ENCODE measurements at regions of chr18 and their contacts with region 1.

Region 1: DNA sequence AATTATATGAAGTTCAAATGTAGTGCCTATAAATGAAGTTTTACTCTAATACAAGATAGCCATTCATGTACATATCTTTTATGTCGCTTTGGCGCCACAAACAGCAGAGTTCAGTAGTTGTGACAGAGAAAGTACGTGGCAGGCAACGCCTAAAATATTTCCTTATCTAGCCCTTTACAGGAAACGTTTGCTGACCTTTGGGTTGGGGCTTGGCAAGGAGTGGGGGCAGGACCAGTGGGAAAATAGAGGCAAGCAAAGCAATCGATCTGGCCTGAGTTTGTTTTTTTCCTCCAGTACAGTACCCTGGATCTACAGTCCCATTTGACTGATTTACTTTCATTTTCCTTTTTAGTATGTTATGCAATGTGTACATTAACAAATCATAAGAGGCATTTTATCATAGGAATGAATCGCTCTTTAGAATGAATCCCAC is 13.1 kb downstream of the CCDC68 start:
- DNase-seq: peak in 6 of 14 experiments; percentile 8 to 52 (median 31)
- ATAC-seq: peak; percentile 51
- H3K4me3 ChIP-seq: peak overlapping the region; percentile 62
- H3K4me3 Mint-ChIP-seq: peak overlapping the region; percentile 86
- H3K27ac ChIP-seq: peak overlapping the region in 1 of 2 donors; percentile 44
- H3K27ac Mint-ChIP-seq: peak overlapping the region; percentile 81
- H3K4me1 ChIP-seq: peaks cover 9% of the 10 kb centered on the region
- H3K4me1 Mint-ChIP-seq: peaks cover 18% of the 10 kb centered on the region
- H3K27me3 ChIP-seq: no peaks in the 10 kb centered on the region
- H3K27me3 Mint-ChIP-seq: no peaks in the 10 kb centered on the region
- CTCF ChIP-seq: no peak

Region 2: DNA sequence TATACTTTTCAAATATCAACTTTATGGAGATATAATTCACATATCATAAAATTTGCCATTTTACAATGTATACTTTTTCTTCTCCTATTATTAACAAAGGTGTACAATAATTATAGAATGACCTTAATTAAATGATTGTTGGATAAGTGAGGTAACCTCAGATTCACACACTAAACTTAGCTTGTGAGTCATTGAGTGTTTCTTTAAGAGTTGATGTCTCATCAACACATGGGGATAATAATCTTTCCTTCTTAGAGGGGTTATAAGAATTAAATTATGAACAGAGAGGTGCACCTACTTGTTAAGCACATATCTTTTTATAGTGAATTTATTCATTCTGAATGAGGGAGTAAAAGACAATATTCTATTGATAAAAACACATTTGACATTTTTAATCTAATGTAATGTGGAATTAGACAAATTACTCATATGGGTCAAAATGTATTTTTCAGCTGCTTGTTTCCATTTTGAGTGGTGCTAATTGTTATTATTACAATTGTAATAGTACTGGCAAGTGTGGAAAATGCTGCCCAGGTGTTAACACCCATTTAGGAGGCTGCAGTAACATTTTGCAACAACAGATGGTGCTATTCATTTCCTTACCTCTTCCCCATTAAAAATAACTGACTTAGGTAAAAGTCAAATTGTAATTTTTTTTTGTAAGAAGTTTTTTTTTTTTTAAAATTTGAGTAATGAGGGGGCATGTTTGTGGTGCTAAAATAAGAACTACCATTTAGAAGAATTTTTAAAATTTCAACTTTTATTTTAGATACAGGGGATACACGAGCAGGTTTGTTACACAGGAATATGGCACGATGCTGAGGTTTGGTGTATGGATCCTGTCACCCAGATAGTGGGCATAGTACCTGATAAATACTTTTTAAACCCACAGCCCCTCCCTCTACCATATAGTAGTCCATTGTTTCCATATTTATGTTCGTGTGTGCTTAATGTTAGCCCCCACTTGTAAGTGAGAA is 387.3 kb before region 1 on chr18:
- CTCF ChIA-PET with region 1: no interaction called
- POLR2A ChIA-PET with region 1: no interaction called
- intact Hi-C with region 1: loop called (anchors 1 to 5 kb)
- DNase-seq: peak in 3 of 14 experiments; percentile 14 to 34 (median 23)
- ATAC-seq: no peak
- H3K4me3 ChIP-seq: no peak overlapping the region
- H3K4me3 Mint-ChIP-seq: no peak overlapping the region
- H3K27ac ChIP-seq: no peak overlapping the region
- H3K27ac Mint-ChIP-seq: no peak overlapping the region
- H3K4me1 ChIP-seq: no peaks in the 10 kb centered on the region
- H3K4me1 Mint-ChIP-seq: no peaks in the 10 kb centered on the region
- H3K27me3 ChIP-seq: no peaks in the 10 kb centered on the region
- H3K27me3 Mint-ChIP-seq: no peaks in the 10 kb centered on the region
- CTCF ChIP-seq: peak; percentile 59

Region 3: DNA sequence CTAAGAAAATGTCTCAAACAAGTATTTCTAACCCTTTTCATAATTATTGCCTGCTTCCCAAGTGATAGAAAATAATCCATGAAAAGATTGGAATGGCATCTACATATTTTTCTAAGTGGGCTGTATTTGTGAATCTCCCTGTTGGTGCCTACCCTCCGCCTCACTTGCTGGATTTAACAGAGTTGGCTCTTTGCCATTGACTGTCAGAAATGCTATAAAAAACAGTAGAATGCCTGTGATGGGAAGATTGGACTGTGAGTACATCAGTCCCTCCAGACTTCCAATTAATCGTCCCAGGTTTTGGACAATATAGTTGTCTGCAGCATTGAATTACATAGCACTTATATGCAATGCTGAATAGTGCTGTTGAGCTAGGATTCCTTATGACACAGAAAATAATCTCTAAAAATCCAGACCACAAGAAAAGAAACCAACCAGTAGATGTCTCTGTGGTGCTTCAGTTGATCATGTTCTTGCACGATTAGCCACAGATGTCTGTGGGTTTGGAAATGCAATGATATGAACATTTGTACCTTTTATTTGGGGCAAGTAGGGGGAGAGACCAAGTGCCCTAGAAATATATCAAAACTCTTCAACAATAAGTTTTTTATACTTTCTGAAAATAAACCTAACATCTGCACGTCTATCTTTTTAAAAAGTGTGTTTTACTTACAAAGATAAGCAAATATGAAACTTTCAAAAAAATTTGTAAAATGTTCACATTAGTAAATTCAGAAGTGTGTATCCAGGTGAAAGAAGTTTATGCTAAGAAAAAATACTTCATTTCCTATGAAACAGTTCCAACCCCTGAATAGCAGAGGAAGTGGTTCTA is 266.6 kb before region 1 on chr18:
- CTCF ChIA-PET with region 1: no interaction called
- POLR2A ChIA-PET with region 1: no interaction called
- intact Hi-C with region 1: loop called in 1 of 2 experiments (anchors 1 kb)
- DNase-seq: peak in 3 of 14 experiments; percentile 46 to 56 (median 50)
- ATAC-seq: peak; percentile 41
- H3K4me3 ChIP-seq: no peak overlapping the region
- H3K4me3 Mint-ChIP-seq: no peak overlapping the region
- H3K27ac ChIP-seq: no peak overlapping the region
- H3K27ac Mint-ChIP-seq: no peak overlapping the region
- H3K4me1 ChIP-seq: no peaks in the 10 kb centered on the region
- H3K4me1 Mint-ChIP-seq: peaks cover 5% of the 10 kb centered on the region
- H3K27me3 ChIP-seq: no peaks in the 10 kb centered on the region
- H3K27me3 Mint-ChIP-seq: no peaks in the 10 kb centered on the region
- CTCF ChIP-seq: peak; percentile 55